ENCODE measurements at regions of chr12 and their contacts with region 1.

Region 1: GRCh38 chr12:9027161-9028059 is 38.1 kb downstream of the KLRG1 start:
- DNase-seq: peak; percentile 63
- ATAC-seq: no peak
- H3K4me3 Mint-ChIP-seq: peak overlapping the region; percentile 36
- H3K27ac Mint-ChIP-seq: peak overlapping the region; percentile 79
- H3K4me1 Mint-ChIP-seq: peaks cover 52% of the 10 kb centered on the region
- H3K27me3 Mint-ChIP-seq: no peaks in the 10 kb centered on the region

Region 2: GRCh38 chr12:8989413-8989812 is 38.0 kb before region 1 on chr12 and contains the start of gene KLRG1:
- CTCF ChIA-PET with region 1: interaction called, 3 read pairs
- POLR2A ChIA-PET with region 1: no interaction called
- intact Hi-C with region 1: loop called (anchors 1 to 2 kb)
- DNase-seq: peak; percentile 20
- ATAC-seq: peak; percentile 66
- H3K4me3 Mint-ChIP-seq: no peak within 1 kb of the TSS
- H3K27ac Mint-ChIP-seq: peak within 1 kb of the TSS; percentile 0
- H3K4me1 Mint-ChIP-seq: peaks cover 58% of the 10 kb centered on the region
- H3K27me3 Mint-ChIP-seq: no peaks in the 10 kb centered on the region
- total RNA-seq, gene KLRG1: 2.3 to 2.7 TPM

Region 3: GRCh38 chr12:8996682-8997360 is 30.6 kb before region 1 on chr12:
- CTCF ChIA-PET with region 1: interaction called, 3 read pairs
- POLR2A ChIA-PET with region 1: no interaction called
- intact Hi-C with region 1: loop called (anchors 1 kb)
- DNase-seq: peak; percentile 52
- ATAC-seq: peak; percentile 93
- H3K4me3 Mint-ChIP-seq: no peak overlapping the region
- H3K27ac Mint-ChIP-seq: no peak overlapping the region
- H3K4me1 Mint-ChIP-seq: peaks cover 62% of the 10 kb centered on the region
- H3K27me3 Mint-ChIP-seq: peaks cover 9% of the 10 kb centered on the region

Region 4: DNA sequence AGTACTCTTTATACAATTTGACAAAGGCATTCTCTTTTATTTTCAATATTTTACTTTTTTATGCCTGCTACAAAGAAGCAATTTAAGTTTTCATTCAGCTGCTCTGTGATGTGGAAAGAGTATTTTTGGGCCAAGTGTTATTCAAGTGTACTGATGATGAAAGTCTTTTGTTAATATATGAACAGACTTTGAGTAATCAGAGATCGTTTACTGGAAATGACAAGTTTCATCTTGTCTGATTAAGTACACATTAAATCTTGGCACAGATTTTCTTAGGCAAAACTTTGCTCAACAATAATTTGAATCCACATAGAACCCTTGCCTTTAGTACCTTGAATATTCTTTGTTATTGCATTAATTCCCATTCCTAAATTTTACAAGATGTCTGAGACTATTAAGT is 194.1 kb after region 1 on chr12:
- CTCF ChIA-PET with region 1: no interaction called
- POLR2A ChIA-PET with region 1: no interaction called
- intact Hi-C with region 1: no loop called
- DNase-seq: no peak
- ATAC-seq: no peak
- H3K4me3 Mint-ChIP-seq: no peak overlapping the region
- H3K27ac Mint-ChIP-seq: no peak overlapping the region
- H3K4me1 Mint-ChIP-seq: no peaks in the 10 kb centered on the region
- H3K27me3 Mint-ChIP-seq: peaks cover 3% of the 10 kb centered on the region